Aorta (tissue), 5 donors: ENCODE measurements at regions of chr16 and their contacts with region 1.

Region 1: GRCh38 chr16:21300309-21301167 is 22.4 kb upstream of the CRYM start:
- DNase-seq: peak; percentile 92 to 96
- ATAC-seq: peak; percentile 99
- H3K4me3 ChIP-seq: peak overlapping the region; percentile 50 to 58
- H3K27ac ChIP-seq: peak overlapping the region in 1 of 2 donors; percentile 79
- H3K4me1 ChIP-seq: no peaks in the 10 kb centered on the region
- H3K27me3 ChIP-seq: no peaks in the 10 kb centered on the region

Region 2: DNA sequence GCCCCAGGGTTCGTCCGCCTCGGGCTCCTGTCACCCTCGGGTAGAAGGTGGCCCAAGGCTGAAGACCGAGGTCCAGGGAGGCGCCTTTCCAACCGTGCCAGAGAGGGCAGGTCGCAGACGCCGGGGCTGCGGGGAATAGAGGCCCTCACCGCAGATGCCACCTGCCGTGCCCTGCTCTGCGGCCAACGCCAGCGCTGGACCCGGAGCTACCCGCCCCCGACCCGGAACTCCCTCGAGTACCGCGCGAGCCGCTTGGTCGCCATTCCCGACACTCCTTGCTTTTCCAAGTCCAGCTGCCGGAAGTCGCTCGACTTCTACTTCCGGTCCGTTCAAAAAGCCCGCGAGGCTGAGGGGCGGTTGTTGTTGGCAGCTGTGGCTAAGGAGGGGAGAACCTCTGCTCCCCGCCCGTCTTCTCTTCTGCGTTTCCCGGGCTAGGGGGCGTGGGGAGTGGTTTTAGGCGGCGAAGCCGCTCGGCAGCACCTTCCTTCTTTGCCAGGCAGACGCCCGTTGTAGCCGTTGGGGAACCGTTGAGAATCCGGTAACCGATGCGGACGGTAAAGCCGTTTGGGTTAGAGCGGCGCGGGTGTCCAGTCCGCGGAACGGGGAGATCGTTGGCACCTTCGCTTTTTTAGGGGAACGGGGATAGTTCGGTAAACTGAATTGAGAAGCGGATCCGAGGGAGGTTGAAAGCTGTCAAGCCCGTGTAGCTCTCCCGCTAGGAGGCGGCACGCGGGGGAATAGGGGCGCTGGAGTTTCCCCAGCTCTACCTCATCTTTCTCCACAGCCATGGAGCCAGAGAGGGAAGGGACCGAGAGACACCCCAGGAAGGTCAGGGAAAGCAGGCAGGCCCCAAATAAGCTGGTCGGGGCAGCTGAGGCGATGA is 494.1 kb before region 1 on chr16 and contains the starts of genes ERI2 and REXO5:
- intact Hi-C with region 1: loop called in 1 of 2 experiments (anchors 10 kb)
- DNase-seq: peak; percentile 94 to 96
- ATAC-seq: peak; percentile 95
- H3K4me3 ChIP-seq: peak within 1 kb of the TSS; percentile 51 to 74
- H3K27ac ChIP-seq: peak within 1 kb of the TSS; percentile 47 to 98
- H3K4me1 ChIP-seq: no peaks in the 10 kb centered on the region
- H3K27me3 ChIP-seq: no peaks in the 10 kb centered on the region
- total RNA-seq, gene ERI2: 6.7 to 14.3 TPM
- total RNA-seq, gene REXO5: 1.1 to 3.0 TPM

Region 3: GRCh38 chr16:20910781-20911321 is 389.7 kb before region 1 on chr16:
- intact Hi-C with region 1: loop called in 1 of 2 experiments (anchors 10 kb)
- DNase-seq: no peak
- ATAC-seq: peak; percentile 59
- H3K4me3 ChIP-seq: no peak overlapping the region
- H3K27ac ChIP-seq: peak overlapping the region; percentile 67 to 92
- H3K4me1 ChIP-seq: peaks cover 5% of the 10 kb centered on the region in 2 donors
- H3K27me3 ChIP-seq: no peaks in the 10 kb centered on the region

Region 4: DNA sequence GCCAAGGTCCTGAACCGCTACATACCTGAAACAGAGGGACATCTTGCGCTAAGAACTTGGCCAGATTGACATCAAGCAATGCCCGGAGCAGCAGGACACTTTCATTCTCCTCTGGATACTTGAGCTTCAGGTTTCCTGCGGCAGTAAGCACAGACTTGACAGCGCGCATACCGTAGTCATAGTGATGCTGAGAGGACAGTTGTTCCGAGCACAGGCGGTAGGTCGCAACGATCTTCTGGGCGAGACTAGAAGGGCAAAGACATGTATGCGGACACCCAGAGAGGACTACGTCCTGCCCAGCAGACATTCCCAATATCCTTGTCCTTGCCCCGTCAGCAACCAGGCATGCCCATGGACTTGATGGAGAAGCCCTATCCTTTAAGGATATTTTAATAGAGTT is 262.8 kb before region 1 on chr16:
- intact Hi-C with region 1: no loop called
- DNase-seq: no peak
- ATAC-seq: no peak
- H3K4me3 ChIP-seq: no peak overlapping the region
- H3K27ac ChIP-seq: no peak overlapping the region
- H3K4me1 ChIP-seq: peaks cover 0 to 1% of the 10 kb centered on the region in 2 donors
- H3K27me3 ChIP-seq: no peaks in the 10 kb centered on the region

Region 5: DNA sequence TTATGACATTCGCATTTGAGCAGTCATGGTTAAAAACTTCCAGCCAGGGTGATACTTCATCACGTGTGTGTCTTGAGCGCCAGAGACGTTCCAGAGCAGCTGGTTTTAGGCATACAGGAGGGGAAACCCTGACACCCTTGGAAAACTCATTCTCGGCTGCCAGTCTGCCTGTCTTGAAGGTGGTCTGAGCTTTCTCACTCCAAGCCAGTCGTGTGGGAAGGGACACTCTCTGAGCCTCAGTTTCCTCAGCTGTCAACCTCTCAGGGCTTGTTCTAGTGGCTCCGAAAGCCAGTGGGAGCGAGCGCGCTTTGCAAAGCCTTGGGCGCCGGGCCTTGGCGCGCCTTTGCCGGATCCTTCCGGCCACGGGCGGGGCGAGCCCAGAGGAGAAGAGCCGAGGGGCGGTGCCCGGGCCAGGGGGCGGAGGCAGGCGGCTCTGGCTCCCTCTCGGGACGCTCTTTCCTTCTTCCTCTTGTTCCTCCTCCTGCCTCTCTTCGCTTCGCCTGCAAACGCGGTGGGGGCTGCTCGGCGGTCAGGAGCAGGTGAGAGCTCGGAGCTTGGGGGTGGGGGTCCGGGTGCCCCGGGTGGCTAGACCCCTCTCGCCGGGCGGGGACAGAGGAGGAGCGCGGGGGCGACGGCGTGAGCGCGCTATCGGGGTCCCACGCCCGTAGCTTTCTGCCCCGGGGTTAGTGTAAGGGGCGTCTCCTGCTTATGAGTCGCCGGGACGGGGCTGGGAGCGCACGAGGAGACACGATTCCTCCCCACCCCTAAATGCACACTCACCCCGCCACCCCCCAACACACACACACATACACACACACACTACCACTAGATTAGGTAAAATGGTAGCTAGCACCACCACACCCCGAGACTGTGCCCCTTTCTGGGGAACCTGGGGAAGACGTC is 142.1 kb before region 1 on chr16 and contains the start of gene LDAF1:
- intact Hi-C with region 1: loop called (anchors 2 kb)
- DNase-seq: peak; percentile 92 to 96
- ATAC-seq: peak; percentile 95
- H3K4me3 ChIP-seq: peak within 1 kb of the TSS; percentile 78 to 94
- H3K27ac ChIP-seq: peak within 1 kb of the TSS; percentile 36 to 48
- H3K4me1 ChIP-seq: no peaks in the 10 kb centered on the region
- H3K27me3 ChIP-seq: no peaks in the 10 kb centered on the region
- total RNA-seq, gene LDAF1: 42.8 to 55.5 TPM

Region 6: GRCh38 chr16:21244518-21245215 is 55.9 kb before region 1 on chr16:
- intact Hi-C with region 1: no loop called
- DNase-seq: no peak
- ATAC-seq: no peak
- H3K4me3 ChIP-seq: no peak overlapping the region
- H3K27ac ChIP-seq: no peak overlapping the region
- H3K4me1 ChIP-seq: no peaks in the 10 kb centered on the region
- H3K27me3 ChIP-seq: no peaks in the 10 kb centered on the region

Region 7: GRCh38 chr16:21283521-21284289 is 16.8 kb before region 1 on chr16:
- intact Hi-C with region 1: loop called in 1 of 2 experiments (anchors 2 kb)
- DNase-seq: peak; percentile 66 to 87
- ATAC-seq: peak; percentile 84
- H3K4me3 ChIP-seq: peak overlapping the region; percentile 8 to 72
- H3K27ac ChIP-seq: peak overlapping the region in 1 of 2 donors; percentile 51
- H3K4me1 ChIP-seq: no peaks in the 10 kb centered on the region
- H3K27me3 ChIP-seq: no peaks in the 10 kb centered on the region

Region 8: DNA sequence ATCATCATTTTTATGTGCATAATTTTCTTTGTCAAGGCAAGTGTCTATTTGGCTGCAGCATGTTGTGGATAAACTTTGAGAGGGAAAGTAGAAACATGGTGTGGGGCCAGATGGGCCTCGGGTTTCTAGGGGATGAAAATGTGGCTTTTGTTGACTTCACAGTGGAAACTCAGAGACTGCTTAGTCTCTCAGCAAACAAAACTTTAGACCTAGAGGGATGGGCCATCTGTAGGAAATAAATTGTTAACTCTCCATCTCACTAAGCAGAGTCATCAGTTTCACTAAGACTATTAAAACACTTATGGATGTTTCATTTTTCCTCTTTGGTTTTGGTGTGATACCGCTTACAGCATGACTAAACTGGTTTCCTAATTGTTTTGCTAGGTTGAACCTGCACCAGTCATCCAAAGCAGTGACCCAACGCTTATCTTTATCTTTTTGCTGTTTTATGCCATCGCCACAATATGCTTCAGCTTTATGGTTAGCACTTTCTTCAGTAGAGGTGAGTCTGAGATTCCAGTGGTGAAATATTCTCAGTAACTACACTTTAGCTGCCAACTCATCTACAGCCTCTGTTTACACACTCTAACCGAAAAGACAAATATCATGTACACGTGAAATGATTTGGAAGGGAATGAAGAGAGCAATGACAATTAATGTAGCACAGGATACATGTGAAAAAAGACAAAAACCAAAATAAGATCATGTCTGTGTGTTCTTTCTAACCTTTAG is 38.2 kb after region 1 on chr16:
- intact Hi-C with region 1: no loop called
- DNase-seq: no peak
- ATAC-seq: no peak
- H3K4me3 ChIP-seq: no peak overlapping the region
- H3K27ac ChIP-seq: no peak overlapping the region
- H3K4me1 ChIP-seq: no peaks in the 10 kb centered on the region
- H3K27me3 ChIP-seq: no peaks in the 10 kb centered on the region